Calu3 (cell line): ENCODE measurements at regions of chr16 and their contacts with region 1.

Region 1: GRCh38 chr16:52497067-52497816 is 49.7 kb downstream of the TOX3 start:
- DNase-seq: no peak
- H3K4me3 Mint-ChIP-seq: peak overlapping the region; percentile 20
- H3K27ac Mint-ChIP-seq: peak overlapping the region; percentile 79
- H3K4me1 Mint-ChIP-seq: peaks cover 92% of the 10 kb centered on the region
- H3K27me3 Mint-ChIP-seq: no peaks in the 10 kb centered on the region
- CTCF ChIP-seq: no peak

Region 2: GRCh38 chr16:51473091-51473490 is 1024.2 kb before region 1 on chr16:
- CTCF ChIA-PET with region 1: no interaction called
- intact Hi-C with region 1: no loop called
- DNase-seq: no peak
- H3K4me3 Mint-ChIP-seq: no peak overlapping the region
- H3K27ac Mint-ChIP-seq: no peak overlapping the region
- H3K4me1 Mint-ChIP-seq: no peaks in the 10 kb centered on the region
- H3K27me3 Mint-ChIP-seq: no peaks in the 10 kb centered on the region
- CTCF ChIP-seq: no peak

Region 3: DNA sequence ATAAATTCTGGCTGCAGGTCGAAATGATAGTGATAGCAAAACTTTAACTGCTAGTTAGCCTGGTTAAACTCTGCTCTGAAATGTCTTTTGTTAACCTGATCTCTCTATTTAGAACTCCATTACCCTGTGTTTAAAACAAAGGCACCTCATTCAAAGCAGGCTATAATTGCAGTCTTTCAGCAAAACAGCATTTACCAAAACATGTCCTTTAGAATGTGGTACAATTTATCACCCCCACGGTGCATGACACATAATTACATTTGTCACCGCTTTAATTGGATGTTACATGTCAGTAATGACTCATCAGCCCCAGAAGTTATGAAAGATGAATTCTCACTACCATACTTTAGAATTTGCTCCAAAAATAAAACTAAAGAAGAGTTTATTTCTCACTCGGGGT is 245.7 kb before region 1 on chr16:
- CTCF ChIA-PET with region 1: no interaction called
- intact Hi-C with region 1: no loop called
- DNase-seq: no peak
- H3K4me3 Mint-ChIP-seq: no peak overlapping the region
- H3K27ac Mint-ChIP-seq: no peak overlapping the region
- H3K4me1 Mint-ChIP-seq: peaks cover 55% of the 10 kb centered on the region
- H3K27me3 Mint-ChIP-seq: no peaks in the 10 kb centered on the region
- CTCF ChIP-seq: no peak

Region 4: DNA sequence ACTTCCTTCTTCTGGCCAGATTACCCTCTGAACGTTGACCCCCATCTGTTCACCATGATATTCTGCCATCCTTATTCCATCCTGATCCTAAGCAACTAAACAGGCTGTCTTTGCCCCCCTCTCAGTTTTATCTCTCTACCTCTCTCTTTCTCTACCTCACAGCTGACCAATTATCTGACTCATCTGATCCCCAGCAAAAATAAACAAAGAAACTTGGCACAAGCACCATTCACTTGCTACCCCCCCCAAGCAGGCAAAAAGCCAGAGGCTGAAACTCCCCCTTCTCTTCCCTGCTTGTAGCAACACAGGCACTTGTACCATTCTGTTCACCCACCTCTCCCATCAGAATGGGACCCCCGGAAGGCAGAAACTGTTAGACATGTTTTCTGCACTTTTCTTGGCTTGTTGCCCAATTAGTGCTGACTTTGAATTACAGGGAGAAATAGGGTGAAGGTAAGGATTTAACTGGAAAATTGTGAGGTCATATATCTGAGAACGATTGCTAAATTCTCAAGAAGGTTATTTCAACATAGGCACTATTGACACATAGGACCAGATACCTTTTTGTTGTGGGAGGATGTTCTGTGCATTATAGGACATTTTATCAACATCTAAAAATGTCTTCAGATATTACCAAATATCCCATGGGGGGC is 113.5 kb before region 1 on chr16:
- CTCF ChIA-PET with region 1: no interaction called
- intact Hi-C with region 1: loop called (anchors 5 kb)
- DNase-seq: peak; percentile 63
- H3K4me3 Mint-ChIP-seq: peak overlapping the region; percentile 18
- H3K27ac Mint-ChIP-seq: peak overlapping the region; percentile 42
- H3K4me1 Mint-ChIP-seq: peaks cover 38% of the 10 kb centered on the region
- H3K27me3 Mint-ChIP-seq: no peaks in the 10 kb centered on the region
- CTCF ChIP-seq: no peak

Region 5: GRCh38 chr16:52439171-52439701 is 58.0 kb before region 1 on chr16:
- CTCF ChIA-PET with region 1: no interaction called
- intact Hi-C with region 1: no loop called
- DNase-seq: no peak
- H3K4me3 Mint-ChIP-seq: no peak overlapping the region
- H3K27ac Mint-ChIP-seq: no peak overlapping the region
- H3K4me1 Mint-ChIP-seq: no peaks in the 10 kb centered on the region
- H3K27me3 Mint-ChIP-seq: no peaks in the 10 kb centered on the region
- CTCF ChIP-seq: no peak

Region 6: DNA sequence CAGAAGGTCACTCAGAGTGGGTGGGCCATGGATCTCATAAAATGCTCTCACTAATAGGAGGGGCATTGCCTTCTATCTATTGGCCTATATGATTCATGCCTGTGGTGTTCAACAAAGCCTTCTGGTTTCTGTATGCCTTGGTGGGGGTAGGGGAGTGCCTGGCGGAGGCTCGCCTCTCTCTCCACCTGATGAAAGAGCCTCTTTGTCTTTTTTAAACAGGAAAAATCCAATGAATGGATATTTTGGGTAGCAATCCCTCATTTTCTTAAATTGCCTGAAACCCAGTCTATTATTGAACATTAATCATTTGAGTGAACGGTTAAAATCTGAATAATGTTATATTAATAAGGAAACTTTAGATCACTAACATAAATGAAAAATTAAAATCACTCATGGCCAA is 40.9 kb before region 1 on chr16:
- CTCF ChIA-PET with region 1: no interaction called
- intact Hi-C with region 1: loop called (anchors 5 kb)
- DNase-seq: peak; percentile 87
- H3K4me3 Mint-ChIP-seq: peak overlapping the region; percentile 44
- H3K27ac Mint-ChIP-seq: peak overlapping the region; percentile 64
- H3K4me1 Mint-ChIP-seq: peaks cover 74% of the 10 kb centered on the region
- H3K27me3 Mint-ChIP-seq: no peaks in the 10 kb centered on the region
- CTCF ChIP-seq: no peak

Region 7: DNA sequence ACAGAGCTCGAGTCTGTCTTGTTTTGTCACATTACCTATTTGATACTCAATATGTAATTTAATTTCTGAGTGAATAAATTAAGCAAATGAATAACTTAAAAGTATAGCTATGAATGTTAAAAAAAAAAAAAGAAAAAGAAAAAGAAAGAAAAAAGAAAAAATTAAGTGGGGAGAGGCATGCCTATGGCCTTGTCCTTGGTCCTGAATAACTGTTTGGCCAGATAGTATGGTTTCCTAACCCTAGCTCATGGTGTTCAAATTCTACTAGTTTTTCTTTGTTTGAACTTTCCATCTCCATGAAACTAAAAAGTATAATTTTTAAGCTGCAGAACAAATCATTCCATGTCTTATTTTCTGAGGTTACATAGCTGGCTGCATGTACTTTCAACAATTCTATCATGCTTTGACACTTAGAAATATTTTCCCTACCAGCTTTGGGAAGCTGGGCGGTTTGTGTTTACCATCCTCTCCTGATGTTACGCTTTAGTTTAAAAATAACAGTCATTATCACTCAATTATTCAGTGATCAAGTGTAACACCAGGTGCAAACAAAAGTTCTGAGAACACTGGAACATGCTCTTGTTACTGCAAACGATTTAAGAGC is 17.9 kb after region 1 on chr16:
- CTCF ChIA-PET with region 1: interaction called, 10 read pairs
- intact Hi-C with region 1: no loop called
- DNase-seq: no peak
- H3K4me3 Mint-ChIP-seq: no peak overlapping the region
- H3K27ac Mint-ChIP-seq: no peak overlapping the region
- H3K4me1 Mint-ChIP-seq: peaks cover 8% of the 10 kb centered on the region
- H3K27me3 Mint-ChIP-seq: no peaks in the 10 kb centered on the region
- CTCF ChIP-seq: no peak

Region 8: DNA sequence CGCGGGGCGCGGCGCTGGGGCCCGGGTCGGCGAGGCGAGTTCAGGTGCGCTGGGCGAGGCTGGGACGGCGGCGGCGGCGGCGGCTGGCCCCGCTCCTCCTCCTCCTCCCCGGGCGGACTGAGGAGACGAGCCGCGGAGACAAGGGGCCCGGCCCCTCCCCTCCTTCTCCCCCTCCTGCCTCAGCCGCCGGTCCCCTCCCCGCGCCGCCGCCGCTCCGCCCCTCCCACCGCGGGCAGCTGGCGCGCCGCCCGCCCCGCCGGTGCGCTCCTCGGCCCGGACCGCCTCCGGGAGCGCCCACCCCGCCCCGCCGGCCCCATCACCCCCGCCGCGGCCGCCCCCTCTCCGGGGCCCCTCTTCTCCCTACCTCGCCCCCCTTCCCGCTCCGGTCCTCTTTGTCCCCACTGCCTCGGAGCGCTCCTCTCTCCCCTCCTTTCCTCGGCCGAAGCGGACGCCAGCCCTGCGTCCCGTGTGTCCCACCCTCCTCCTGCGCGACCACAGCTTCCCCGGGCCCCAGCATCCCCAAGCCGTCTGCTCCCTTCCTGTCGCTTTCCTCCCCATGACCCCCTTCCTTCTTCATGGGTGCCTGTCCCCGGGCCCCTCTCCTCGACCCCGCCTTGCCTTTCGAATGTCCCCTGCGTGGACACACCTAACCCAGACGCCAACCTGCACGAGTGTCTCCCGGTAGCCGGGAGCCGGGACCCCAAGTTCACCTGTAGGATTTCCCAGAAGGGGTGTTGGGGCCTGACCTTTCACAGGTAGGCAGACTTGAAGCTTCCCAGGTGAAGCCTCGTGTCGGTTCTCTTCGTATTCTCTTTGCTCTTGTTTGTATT is 50.0 kb after region 1 on chr16 and contains the start of gene TOX3:
- CTCF ChIA-PET with region 1: no interaction called
- intact Hi-C with region 1: loop called (anchors 2 kb)
- DNase-seq: peak; percentile 77
- H3K4me3 Mint-ChIP-seq: peak within 1 kb of the TSS; percentile 78
- H3K27ac Mint-ChIP-seq: peak within 1 kb of the TSS; percentile 69
- H3K4me1 Mint-ChIP-seq: peaks cover 32% of the 10 kb centered on the region
- H3K27me3 Mint-ChIP-seq: no peaks in the 10 kb centered on the region
- CTCF ChIP-seq: no peak
- total RNA-seq, gene TOX3: 27.4 and 29.4 TPM in 2 replicates

Region 9: DNA sequence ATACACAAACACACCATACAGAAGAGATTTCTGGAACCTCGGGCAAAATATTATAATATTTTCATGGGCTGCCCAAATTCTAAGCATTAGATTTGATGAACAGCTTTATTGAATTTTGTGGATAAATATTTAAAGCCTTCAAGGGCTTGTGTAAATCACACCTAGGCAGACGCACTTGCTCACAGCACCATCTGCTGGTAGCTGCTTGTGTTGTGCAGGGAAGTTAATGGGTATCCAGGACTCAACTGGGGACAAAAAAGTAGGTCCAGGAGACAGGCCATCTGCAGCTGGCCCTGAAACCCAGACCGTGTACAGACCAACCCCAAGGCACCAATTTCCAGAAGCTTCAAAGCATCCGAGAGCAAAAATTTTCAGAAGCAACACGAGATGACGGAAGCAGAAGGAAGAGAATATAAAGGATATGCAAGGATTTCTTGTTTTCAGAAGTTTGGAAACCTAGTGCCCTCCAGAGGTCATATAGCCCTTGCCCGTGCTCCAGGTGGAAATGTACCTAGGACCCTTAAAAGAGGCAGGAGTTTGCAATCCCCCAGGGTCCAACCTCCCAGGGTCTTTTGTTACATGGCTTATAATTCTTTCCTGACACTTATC is 415.4 kb after region 1 on chr16:
- CTCF ChIA-PET with region 1: no interaction called
- intact Hi-C with region 1: loop called (anchors 2 kb)
- DNase-seq: peak; percentile 82
- H3K4me3 Mint-ChIP-seq: no peak overlapping the region
- H3K27ac Mint-ChIP-seq: no peak overlapping the region
- H3K4me1 Mint-ChIP-seq: peaks cover 7% of the 10 kb centered on the region
- H3K27me3 Mint-ChIP-seq: no peaks in the 10 kb centered on the region
- CTCF ChIP-seq: peak; percentile 89